ENCODE measurements at regions of chr5 and their contacts with region 1.

Region 1: GRCh38 chr5:34639852-34640605 is 16.1 kb upstream of the RAI14 start:
- DNase-seq: peak; percentile 79
- H3K4me3 ChIP-seq: no peak overlapping the region
- CTCF ChIP-seq: no peak

Region 2: DNA sequence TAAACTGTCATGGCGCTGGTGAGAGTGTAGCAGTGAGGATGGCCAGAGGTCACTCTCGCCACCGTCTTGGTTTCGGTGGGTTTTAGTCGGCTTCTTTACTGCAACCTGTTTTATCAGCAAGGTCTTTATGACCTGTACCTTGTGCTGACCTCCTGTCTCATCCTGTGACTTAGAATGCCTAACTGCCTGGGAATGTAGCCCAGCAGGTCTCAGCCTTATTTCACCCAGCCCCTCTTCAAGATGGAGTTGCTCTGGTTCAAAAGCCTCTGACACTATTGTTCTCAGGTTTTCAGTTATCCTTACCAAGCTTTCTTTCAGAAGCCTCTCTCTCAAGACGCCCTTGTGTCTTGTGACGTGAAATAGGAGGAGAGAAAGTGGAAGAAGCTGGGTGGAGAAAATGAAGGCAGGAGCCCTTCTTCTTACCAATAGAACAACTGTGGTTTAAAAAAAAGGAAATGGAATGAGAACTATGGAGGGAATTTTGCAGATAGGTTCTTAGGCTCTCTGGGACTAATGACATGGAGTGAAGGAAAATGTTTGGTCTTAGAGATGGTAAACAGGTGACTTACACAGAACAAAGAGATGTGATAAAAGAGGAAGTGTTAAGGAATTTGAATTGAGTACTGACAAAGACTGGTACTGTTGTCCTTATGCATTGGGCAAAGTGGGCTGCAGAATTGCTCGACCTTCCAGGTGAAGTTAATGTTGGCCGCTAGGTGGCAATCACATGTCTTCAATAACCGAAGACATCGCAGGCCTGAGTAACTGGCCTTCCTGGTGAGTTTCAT is 117.2 kb before region 1 on chr5:
- in situ Hi-C with region 1: loop called (anchors 10 kb)
- DNase-seq: peak; percentile 84
- H3K4me3 ChIP-seq: no peak overlapping the region
- CTCF ChIP-seq: peak; percentile 66

Region 3: DNA sequence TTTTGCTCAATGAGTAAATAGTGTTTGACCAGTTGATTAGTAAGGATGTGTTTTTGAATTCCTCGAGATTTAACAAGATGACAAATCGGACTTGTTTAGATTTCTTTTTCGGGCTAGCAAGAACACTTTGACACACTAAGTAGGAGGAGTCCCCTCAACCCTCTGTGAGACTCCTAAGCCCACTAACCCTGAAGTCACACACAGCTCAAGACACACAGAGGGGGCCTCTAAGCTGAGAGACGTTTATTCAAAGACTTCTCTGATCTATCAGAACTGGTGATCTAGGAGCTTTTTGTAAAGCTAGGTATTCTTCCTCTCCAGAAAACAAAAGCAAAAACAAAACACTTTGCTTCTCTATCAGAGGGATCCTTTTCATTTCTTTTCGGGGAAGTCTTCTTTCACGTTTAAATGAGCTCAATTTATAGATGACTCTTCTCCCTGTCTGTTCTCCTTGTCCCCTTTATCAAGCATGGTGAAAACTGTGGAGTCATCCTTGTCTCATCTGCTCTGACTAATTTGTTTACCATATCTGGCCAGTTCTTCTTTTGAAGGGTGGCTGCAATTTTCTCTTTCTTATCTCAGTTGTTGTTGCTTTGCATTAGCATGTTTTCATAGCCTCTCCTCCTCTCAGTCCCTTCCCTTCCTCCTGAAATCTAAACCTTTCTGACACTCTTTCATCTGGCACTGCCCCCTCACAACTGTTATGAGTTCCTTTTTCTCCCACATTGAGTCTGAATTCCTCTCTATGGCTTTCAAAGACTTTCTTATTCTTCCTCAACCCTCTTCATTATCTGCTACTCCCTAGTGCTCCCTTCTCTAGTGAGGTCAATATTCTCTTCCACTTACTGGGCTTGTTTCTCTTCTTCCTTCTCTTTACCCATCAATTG is 52.4 kb before region 1 on chr5:
- in situ Hi-C with region 1: no loop called
- DNase-seq: no peak
- H3K4me3 ChIP-seq: no peak overlapping the region
- CTCF ChIP-seq: no peak

Measured in astrocyte of the cerebellum (primary cell).